Mammary epithelial cell (primary cell): ENCODE measurements at regions of chr17 and their contacts with region 1.

Region 1: GRCh38 chr17:75764711-75765421 is at the start of gene GALK1:
- DNase-seq: peak; percentile 76
- H3K4me3 ChIP-seq: peak within 1 kb of the TSS; percentile 45 to 57 (median 47)
- H3K27ac ChIP-seq: peak within 1 kb of the TSS; percentile 20
- H3K4me1 ChIP-seq: peaks cover 9% of the 10 kb centered on the region
- H3K27me3 ChIP-seq: no peaks in the 10 kb centered on the region
- CTCF ChIP-seq: peak; percentile 6 to 74
- total RNA-seq, gene GALK1: 1.5 to 3.0 TPM

Region 2: DNA sequence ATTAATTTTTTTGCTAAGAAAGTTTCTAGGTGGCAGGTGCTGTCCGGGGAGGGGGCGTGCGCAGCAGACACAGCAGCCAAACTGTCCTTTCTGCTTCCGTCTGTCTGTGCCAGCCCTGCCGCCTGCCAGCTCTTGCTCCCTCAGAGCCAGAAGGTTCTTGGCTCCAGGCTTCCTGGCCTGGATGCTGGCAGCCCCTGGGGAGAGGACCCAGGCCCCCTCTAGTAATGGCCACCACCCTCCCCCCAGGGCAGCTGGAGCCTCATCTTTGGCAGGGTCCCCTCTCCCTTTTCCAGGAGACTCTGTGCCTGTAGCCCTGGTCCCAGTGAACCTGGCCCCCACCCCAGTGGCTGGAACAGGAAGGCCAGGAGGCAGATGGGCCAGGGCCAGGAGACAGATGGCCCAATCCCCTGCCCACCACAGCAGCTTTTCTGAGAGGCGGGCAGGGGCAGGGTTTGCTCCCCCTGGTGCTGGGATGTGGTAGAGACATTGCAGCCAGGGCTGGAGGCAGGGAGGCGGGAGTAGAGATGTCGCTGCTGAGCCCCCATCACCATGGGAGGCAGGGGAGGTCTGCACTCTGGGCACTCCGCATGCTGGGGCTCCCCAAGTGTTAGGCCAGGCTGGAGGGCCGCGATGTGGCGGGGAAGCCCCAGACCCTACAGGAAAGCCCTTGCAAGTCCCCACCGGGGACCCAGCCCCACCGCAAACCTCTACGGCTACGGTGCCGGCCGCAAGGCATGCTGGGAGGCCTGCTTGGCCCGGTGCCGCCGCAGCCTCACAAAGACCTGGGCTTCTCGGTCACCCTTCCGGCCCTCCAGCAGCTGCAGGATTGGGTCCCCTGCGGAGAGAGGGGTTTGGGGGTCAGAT is 62.6 kb after region 1 on chr17:
- CTCF ChIA-PET with region 1: interaction called, 3 read pairs
- dilution Hi-C with region 1: no loop called
- in situ Hi-C with region 1: no loop called
- intact Hi-C with region 1: loop called (anchors 1 kb)
- DNase-seq: no peak
- H3K4me3 ChIP-seq: no peak overlapping the region
- H3K27ac ChIP-seq: no peak overlapping the region
- H3K4me1 ChIP-seq: no peaks in the 10 kb centered on the region
- H3K27me3 ChIP-seq: no peaks in the 10 kb centered on the region
- CTCF ChIP-seq: peak; percentile 48 to 60

Region 3: GRCh38 chr17:76005263-76006149 is 240.6 kb after region 1 on chr17:
- CTCF ChIA-PET with region 1: no interaction called
- dilution Hi-C with region 1: no loop called
- in situ Hi-C with region 1: no loop called
- intact Hi-C with region 1: loop called (anchors 5 kb)
- DNase-seq: peak; percentile 62
- H3K4me3 ChIP-seq: no peak overlapping the region
- H3K27ac ChIP-seq: no peak overlapping the region
- H3K4me1 ChIP-seq: no peaks in the 10 kb centered on the region
- H3K27me3 ChIP-seq: no peaks in the 10 kb centered on the region
- CTCF ChIP-seq: peak; percentile 45 to 76